ENCODE measurements at regions of chr15 and their contacts with region 1.

Region 1: DNA sequence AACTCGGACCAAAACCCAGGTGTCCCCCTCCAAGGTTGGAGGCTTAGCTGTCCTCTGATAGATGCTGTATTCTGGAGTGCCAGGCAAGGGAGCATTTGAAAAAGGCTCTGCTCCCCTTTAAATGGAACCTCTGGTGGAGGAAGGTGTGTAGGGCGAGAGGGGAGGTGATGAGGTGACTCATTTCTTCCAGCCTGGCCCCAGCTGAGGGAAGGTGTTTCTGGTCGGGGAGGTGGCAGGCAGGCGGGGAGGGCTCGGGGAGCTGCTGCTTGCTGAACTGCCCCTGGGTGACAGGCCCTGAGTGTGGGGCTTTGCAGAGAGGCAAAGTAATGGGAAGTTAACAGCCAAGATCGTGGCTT is 18.8 kb downstream of the PSTPIP1 start:
- DNase-seq: peak; percentile 51 to 97 (median 86)
- H3K4me3 ChIP-seq: peak overlapping the region; percentile 47
- H3K4me3 Mint-ChIP-seq: peak overlapping the region; percentile 66 to 90 (median 89)
- H3K27ac ChIP-seq: peak overlapping the region; percentile 64
- H3K27ac Mint-ChIP-seq: peak overlapping the region; percentile 82 to 100 (median 96)
- H3K4me1 ChIP-seq: peaks cover 97% of the 10 kb centered on the region
- H3K4me1 Mint-ChIP-seq: peaks cover 92 to 100% (median 99%) of the 10 kb centered on the region in 3 donors
- H3K27me3 ChIP-seq: no peaks in the 10 kb centered on the region
- H3K27me3 Mint-ChIP-seq: no peaks in the 10 kb centered on the region

Region 2: DNA sequence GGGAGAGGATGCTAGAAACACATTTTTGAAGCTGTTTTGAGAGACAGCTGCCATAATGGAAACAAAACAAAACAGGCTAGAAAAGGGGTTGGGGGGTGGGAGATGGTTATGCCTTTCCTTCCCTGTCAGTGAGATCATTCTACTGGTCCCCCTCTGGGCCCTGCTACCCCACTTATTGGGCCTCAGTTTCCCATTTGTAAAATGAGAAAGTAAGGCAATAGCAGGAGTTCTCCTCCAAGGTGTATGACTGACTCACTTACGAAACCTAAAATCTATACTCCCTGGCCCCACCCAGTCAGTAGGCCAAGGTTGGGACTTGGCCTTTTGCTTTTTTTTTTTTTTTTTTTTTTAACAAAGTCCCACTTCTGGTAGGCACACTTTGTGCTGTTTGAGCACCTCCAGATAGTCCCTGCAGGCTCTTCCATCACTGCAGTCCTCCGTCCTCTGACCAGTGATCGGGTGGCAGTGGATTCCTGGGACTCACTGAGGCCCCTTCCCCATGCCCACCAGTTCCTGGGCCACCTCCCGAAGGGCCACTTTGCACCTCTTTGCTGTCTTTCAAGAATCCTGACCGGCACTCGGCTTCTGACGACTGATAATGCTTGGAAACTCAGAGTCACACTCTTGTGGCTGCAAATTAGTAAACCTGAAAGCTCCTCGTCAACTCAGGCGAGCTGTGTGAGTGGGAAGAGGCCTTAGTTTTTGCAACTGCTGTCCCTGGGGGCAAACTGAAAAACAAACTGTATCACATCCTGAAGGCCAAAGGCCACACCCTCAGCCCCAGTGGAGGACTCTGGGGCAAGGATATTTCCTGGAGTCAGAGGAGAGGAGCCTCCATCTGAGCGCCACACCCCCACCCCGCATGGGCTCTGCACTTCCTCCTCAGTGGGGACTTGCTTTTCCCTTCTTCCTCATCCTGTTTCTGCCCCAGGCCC is 25.6 kb before region 1 on chr15:
- CTCF ChIA-PET with region 1: interaction called, 10 read pairs
- POLR2A ChIA-PET with region 1: interaction called, 6 read pairs
- DNase-seq: peak in 1 of 5 donors; percentile 51
- H3K4me3 ChIP-seq: no peak overlapping the region
- H3K4me3 Mint-ChIP-seq: peak overlapping the region; percentile 6 to 86 (median 59)
- H3K27ac ChIP-seq: peak overlapping the region; percentile 16
- H3K27ac Mint-ChIP-seq: peak overlapping the region; percentile 52 to 96 (median 90)
- H3K4me1 ChIP-seq: peaks cover 26% of the 10 kb centered on the region
- H3K4me1 Mint-ChIP-seq: peaks cover 31 to 55% (median 37%) of the 10 kb centered on the region in 3 donors
- H3K27me3 ChIP-seq: no peaks in the 10 kb centered on the region
- H3K27me3 Mint-ChIP-seq: no peaks in the 10 kb centered on the region

Region 3: DNA sequence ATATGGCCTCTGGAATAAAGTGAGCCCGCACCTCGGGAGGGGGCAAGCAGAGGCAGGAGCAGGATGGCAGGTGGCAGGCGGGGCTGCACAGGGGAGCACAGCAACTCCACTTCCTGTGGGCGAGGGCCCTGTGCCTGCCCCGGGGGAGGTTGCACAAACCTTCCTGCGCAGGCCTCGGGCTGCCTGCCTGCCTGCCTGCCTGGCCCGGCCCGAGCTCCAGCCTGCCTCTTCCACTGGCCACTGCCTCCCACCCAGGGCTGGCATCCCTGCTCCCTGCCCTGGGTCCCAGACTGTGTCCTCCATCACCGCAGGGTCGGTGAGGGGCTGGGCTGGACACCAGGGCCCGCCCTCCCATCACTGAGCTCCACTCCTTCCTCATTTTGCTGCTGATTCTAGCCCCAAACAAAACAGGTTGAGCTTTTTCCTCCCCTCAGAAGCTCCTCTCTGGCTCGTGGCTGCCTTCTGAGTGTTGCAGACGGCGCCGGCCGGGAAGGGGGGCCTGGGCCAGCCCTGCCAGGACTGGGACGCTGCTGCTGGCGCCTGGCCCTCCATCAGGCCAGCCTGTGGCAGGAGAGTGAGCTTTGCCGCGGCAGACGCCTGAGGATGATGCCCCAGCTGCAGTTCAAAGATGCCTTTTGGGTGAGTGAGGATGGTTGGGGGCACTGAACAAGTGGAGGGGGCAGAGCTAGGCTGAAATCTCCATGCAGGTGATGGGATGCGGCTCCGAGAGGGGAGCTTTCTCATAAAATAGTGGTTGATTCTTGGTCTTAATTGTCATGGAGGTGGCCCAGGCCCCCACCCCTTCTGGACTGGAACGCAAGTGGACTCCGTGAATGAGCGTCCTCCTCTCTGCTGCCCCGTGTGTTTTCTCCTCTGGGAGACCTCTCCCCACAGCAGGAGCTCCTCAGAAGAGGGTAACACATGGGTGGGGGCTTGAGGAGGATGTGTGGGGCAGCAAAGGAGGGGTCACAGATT is 18.5 kb before region 1 on chr15 and contains the start of gene PSTPIP1:
- CTCF ChIA-PET with region 1: interaction called, 52 read pairs
- POLR2A ChIA-PET with region 1: interaction called, 97 read pairs
- DNase-seq: peak; percentile 48 to 83 (median 70)
- H3K4me3 ChIP-seq: peak within 1 kb of the TSS; percentile 92
- H3K4me3 Mint-ChIP-seq: peak within 1 kb of the TSS; percentile 81 to 99 (median 97)
- H3K27ac ChIP-seq: peak within 1 kb of the TSS; percentile 57
- H3K27ac Mint-ChIP-seq: peak within 1 kb of the TSS; percentile 86 to 100 (median 97)
- H3K4me1 ChIP-seq: peaks cover 62% of the 10 kb centered on the region
- H3K4me1 Mint-ChIP-seq: peaks cover 58 to 74% (median 64%) of the 10 kb centered on the region in 3 donors
- H3K27me3 ChIP-seq: no peaks in the 10 kb centered on the region
- H3K27me3 Mint-ChIP-seq: no peaks in the 10 kb centered on the region
- total RNA-seq, gene PSTPIP1: 123 to 127 TPM

Region 4: DNA sequence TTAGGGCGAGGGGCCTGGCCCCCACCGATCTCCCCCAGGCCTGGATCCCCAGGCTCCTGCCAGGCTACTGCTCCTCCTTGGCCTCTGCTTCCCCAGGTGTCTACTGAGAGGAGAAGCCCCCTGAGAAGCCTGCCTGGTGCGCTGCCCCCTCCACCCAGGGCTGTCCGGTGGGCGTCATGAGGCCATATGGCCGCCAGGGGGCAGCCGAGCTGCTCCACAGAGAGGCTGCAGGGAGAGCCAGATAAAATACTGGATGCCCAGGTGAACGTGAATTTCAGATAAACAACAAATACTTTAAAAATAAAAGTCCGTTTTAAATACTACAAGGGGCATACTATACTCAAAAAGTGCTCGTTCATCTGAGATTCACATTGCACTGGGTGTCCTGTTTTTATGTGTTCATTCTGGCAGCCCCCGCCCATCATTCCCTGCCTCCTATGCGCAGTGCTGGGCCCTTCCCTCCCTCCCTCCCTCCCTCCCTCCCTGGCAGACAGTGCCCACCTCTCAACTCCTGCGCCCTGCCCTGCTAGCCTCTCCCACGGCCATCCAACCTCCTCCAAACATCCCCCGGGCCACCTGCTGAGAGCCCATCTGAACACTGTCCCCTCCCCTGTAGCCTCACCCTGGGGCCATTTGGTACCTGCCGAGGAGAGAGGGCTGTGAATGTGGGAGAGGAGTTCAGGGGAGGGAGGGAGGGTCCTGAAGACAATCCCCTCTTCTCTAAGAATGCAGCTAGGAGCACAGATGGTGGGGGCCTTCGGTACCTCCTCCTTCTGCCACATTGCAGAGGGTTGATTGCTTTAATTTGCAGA is 10.7 kb after region 1 on chr15:
- CTCF ChIA-PET with region 1: interaction called, 21 read pairs
- POLR2A ChIA-PET with region 1: interaction called, 4 read pairs
- DNase-seq: peak; percentile 54 to 76 (median 62)
- H3K4me3 ChIP-seq: no peak overlapping the region
- H3K4me3 Mint-ChIP-seq: peak overlapping the region in 3 of 7 donors; percentile 20 to 55 (median 41)
- H3K27ac ChIP-seq: peak overlapping the region; percentile 54
- H3K27ac Mint-ChIP-seq: peak overlapping the region; percentile 87 to 100 (median 98)
- H3K4me1 ChIP-seq: peaks cover 48% of the 10 kb centered on the region
- H3K4me1 Mint-ChIP-seq: peaks cover 49 to 70% (median 54%) of the 10 kb centered on the region in 3 donors
- H3K27me3 ChIP-seq: no peaks in the 10 kb centered on the region
- H3K27me3 Mint-ChIP-seq: peaks cover 0 to 2% of the 10 kb centered on the region in 2 donors

Region 5: GRCh38 chr15:77538027-77538451 is 524.3 kb after region 1 on chr15:
- CTCF ChIA-PET with region 1: no interaction called
- POLR2A ChIA-PET with region 1: no interaction called
- DNase-seq: no peak
- H3K4me3 ChIP-seq: no peak overlapping the region
- H3K4me3 Mint-ChIP-seq: peak overlapping the region in 1 of 7 donors; percentile 42
- H3K27ac ChIP-seq: no peak overlapping the region
- H3K27ac Mint-ChIP-seq: no peak overlapping the region
- H3K4me1 ChIP-seq: peaks cover 7% of the 10 kb centered on the region
- H3K4me1 Mint-ChIP-seq: peaks cover 0 to 6% (median 0%) of the 10 kb centered on the region in 3 donors
- H3K27me3 ChIP-seq: no peaks in the 10 kb centered on the region
- H3K27me3 Mint-ChIP-seq: peaks cover 8 to 14% of the 10 kb centered on the region in 2 donors